Dendritic cell treated with granulocyte-macrophage colony-stimulating factor and Interleukin-4, amounts not matched to agents 40 ng/mL and 50 ng/mL, for 4 days (primary cell): ENCODE measurements at regions of chr1 and their contacts with region 1.

Region 1: GRCh38 chr1:226870401-226871279 is at the start of gene PSEN2:
- H3K4me3 Mint-ChIP-seq: peak within 1 kb of the TSS; percentile 78
- H3K27ac Mint-ChIP-seq: peak within 1 kb of the TSS; percentile 66
- H3K4me1 Mint-ChIP-seq: peaks cover 28% of the 10 kb centered on the region
- H3K27me3 Mint-ChIP-seq: peaks cover 20% of the 10 kb centered on the region

Region 2: GRCh38 chr1:226940029-226940805 is 69.6 kb after region 1 on chr1 and contains the start of gene COQ8A:
- intact Hi-C with region 1: loop called (anchors 2 kb)
- H3K4me3 Mint-ChIP-seq: peak within 1 kb of the TSS; percentile 82
- H3K27ac Mint-ChIP-seq: peak within 1 kb of the TSS; percentile 98
- H3K4me1 Mint-ChIP-seq: peaks cover 68% of the 10 kb centered on the region
- H3K27me3 Mint-ChIP-seq: no peaks in the 10 kb centered on the region

Region 3: GRCh38 chr1:226951286-226952117 is 80.9 kb after region 1 on chr1:
- intact Hi-C with region 1: loop called (anchors 5 kb)
- H3K4me3 Mint-ChIP-seq: no peak overlapping the region
- H3K27ac Mint-ChIP-seq: no peak overlapping the region
- H3K4me1 Mint-ChIP-seq: peaks cover 39% of the 10 kb centered on the region
- H3K27me3 Mint-ChIP-seq: no peaks in the 10 kb centered on the region